ENCODE measurements at regions of chr10 and their contacts with region 1.

Region 1: DNA sequence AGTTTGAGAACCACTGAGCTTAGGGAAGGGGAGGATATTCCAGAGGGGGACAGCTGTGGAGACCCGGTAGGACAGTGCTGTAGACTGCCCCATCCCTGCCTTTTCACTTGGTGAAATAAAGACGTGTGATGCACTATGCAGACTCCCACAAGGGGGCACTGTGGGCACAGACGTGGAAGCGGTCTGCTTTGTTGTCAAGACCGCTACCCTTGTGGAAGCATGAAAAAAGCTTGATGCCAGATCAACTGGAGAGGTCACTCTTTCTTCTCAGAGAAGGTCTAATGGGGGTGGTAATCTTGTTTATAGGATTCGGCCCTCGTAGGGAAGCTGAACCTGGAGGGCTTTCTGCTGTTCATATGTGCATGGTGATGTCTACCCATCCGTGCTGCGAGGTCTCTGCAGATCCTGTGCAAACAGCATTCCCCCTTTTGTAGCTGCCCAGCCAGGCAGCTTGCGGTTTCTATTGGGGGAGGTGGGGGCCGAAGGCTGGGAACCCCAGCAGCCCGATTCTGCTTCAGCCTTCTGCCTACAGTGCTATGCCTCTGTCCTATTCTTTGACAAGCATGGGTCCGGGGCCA is 13.7 kb downstream of the RPS24 start:
- DNase-seq: peak; percentile 90
- H3K4me3 Mint-ChIP-seq: no peak overlapping the region
- H3K27ac Mint-ChIP-seq: no peak overlapping the region
- H3K4me1 Mint-ChIP-seq: peaks cover 26% of the 10 kb centered on the region
- H3K27me3 Mint-ChIP-seq: no peaks in the 10 kb centered on the region

Region 2: DNA sequence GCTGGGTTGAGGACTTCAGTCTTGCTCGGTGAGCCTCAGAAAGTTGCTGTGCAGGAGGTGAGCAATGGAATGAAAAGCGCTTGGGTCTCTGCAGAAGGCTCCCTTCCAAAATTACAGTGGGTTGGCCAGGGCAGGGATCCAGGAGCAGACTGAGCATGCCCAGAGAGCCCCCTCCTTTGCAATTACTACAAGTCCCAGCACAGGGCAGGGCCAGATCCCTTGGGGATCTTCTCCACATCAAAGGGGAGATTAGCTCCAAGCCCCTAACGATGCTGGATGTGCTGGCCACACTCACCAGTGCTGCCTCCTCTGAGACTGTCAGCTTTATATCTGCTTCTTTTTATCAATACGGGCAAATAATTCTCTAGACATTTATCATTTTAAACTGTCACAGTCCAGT is 323.7 kb after region 1 on chr10:
- CTCF ChIA-PET with region 1: no interaction called
- intact Hi-C with region 1: no loop called
- DNase-seq: no peak
- H3K4me3 Mint-ChIP-seq: no peak overlapping the region
- H3K27ac Mint-ChIP-seq: no peak overlapping the region
- H3K4me1 Mint-ChIP-seq: no peaks in the 10 kb centered on the region
- H3K27me3 Mint-ChIP-seq: no peaks in the 10 kb centered on the region

Region 3: GRCh38 chr10:78437998-78438906 is 390.8 kb after region 1 on chr10:
- CTCF ChIA-PET with region 1: interaction called, 3 read pairs
- intact Hi-C with region 1: loop called (anchors 2 kb)
- DNase-seq: peak; percentile 35
- H3K4me3 Mint-ChIP-seq: no peak overlapping the region
- H3K27ac Mint-ChIP-seq: no peak overlapping the region
- H3K4me1 Mint-ChIP-seq: no peaks in the 10 kb centered on the region
- H3K27me3 Mint-ChIP-seq: no peaks in the 10 kb centered on the region

Region 4: DNA sequence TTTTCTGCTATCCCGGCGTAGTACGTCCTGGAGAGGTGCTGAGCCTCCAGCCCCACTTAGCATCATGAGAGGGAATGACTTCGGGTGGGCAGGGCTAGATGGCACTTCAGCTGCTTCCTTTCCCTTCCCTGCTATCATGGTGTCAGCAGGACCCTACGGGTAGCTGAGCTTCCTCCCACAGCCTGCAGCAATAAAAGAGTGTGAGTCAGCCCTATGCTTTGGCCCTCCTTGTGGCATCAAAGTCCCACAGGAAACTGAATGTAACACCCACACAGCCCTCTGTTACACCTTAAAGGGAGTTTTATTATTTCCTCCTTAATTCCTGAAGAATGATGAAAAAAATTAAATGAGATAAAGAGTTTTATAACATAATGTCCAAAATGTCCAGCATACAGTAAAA is 444.4 kb after region 1 on chr10:
- CTCF ChIA-PET with region 1: no interaction called
- intact Hi-C with region 1: no loop called
- DNase-seq: no peak
- H3K4me3 Mint-ChIP-seq: no peak overlapping the region
- H3K27ac Mint-ChIP-seq: no peak overlapping the region
- H3K4me1 Mint-ChIP-seq: no peaks in the 10 kb centered on the region
- H3K27me3 Mint-ChIP-seq: peaks cover 13% of the 10 kb centered on the region

Region 5: DNA sequence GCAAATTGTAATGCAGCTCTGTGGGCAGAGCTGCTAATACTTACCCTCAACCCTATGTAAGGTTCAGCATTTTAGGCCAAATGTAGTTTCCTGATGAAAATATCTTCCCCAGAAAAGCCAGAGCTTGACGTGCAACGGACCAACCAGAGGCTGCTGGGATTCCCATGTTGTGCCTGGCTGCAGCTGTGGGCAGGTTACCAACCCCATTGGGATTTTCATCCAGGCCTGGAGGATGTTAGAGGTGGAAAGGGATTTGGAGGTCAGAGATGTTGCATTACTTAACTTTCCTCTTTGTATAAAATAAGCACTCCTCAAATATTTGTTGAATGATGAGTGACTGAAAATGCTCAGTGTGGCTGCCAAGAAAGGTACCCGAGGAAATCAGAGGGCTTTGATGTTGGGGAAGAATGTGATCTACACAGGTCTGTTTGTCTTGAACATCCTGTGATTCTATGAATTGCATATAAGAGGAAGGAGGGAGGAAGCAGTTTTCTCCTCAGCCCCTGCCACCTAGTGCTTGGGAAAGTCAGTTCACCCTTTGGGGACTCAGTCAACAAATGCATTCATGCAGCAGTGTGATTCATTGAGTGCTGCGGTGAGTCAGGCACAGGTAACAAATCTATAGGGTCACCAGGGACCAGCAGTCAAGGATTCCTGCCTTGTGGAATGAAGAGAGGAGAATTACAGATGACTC is 473.5 kb after region 1 on chr10:
- CTCF ChIA-PET with region 1: interaction called, 3 read pairs
- intact Hi-C with region 1: loop called (anchors 5 kb)
- DNase-seq: peak; percentile 61
- H3K4me3 Mint-ChIP-seq: no peak overlapping the region
- H3K27ac Mint-ChIP-seq: no peak overlapping the region
- H3K4me1 Mint-ChIP-seq: peaks cover 9% of the 10 kb centered on the region
- H3K27me3 Mint-ChIP-seq: no peaks in the 10 kb centered on the region

Region 6: DNA sequence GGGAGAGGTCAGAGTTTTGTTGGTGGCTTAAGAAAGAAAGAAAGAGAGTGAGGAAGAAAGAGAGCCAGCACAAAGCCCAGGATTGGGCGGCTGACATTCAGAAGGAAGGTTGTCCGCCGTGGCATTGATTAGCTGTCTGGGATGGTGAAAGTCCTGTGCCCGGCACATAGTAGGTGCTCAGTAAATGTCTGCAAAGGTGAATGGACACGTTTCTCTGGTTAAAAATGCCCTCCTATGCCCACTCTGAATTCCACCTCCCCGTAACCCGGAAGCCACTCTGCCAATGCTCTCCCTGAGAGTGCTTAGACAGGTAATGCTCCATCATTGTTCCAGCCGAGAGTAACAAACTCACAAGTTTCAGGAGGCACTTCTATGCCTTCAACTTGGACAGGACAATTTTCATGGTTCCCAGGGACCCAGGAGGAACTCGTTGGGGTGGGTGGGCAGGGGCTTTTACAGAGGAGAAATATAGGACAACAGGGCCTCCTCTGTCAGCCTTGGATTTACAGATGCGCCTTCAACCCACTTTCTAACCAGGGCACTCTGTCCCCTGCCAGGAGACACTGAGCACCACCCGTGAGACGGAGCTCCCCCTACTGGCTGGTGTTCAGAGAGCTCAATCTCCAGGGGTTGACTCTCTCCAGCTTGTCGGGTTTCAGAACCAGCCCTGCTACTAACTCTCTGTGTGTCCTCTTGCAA is 609.9 kb after region 1 on chr10:
- CTCF ChIA-PET with region 1: interaction called, 17 read pairs
- intact Hi-C with region 1: loop called (anchors 1 kb)
- DNase-seq: peak; percentile 85
- H3K4me3 Mint-ChIP-seq: no peak overlapping the region
- H3K27ac Mint-ChIP-seq: no peak overlapping the region
- H3K4me1 Mint-ChIP-seq: no peaks in the 10 kb centered on the region
- H3K27me3 Mint-ChIP-seq: peaks cover 9% of the 10 kb centered on the region